Spleen (tissue), 13 donors: ENCODE measurements at regions of chr11 and their contacts with region 1.

Region 1: DNA sequence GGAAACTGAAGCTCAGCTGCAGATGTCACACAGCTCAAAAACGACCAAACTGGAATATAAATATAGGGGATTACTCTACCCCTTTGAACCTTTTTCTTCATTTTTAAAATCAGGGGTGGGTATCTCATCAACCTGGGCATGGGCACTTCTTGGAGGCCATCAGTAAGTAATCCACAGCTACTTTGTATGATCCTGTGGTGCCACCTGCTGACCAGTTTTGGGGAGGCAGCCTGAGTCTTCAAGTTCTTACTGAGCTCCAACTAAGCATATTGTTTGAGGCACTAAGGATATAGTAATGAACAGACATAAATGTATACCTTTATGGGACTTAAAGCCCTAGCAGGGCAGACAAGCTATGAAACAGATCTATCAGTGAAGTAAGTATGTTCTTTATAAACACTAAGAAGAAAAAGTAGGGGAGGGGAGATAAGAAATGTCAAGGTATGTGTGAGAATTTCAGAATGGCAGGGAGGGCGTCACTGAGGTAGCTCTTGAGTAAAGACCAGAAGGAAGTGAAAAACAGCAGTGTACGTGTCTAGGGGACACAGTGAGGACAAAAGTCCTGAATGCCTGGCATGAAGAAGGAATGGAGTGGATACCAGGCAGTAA is 18.4 kb downstream of the TUB start:
- DNase-seq: peak; percentile 78
- H3K4me3 ChIP-seq: no peak overlapping the region
- H3K27ac ChIP-seq: no peak overlapping the region
- H3K4me1 ChIP-seq: no peaks in the 10 kb centered on the region
- H3K27me3 ChIP-seq: no peaks in the 10 kb centered on the region
- CTCF ChIP-seq: peak in 10 of 11 experiments; percentile 55 to 85 (median 73)
- POLR2A ChIP-seq: no peak

Region 2: DNA sequence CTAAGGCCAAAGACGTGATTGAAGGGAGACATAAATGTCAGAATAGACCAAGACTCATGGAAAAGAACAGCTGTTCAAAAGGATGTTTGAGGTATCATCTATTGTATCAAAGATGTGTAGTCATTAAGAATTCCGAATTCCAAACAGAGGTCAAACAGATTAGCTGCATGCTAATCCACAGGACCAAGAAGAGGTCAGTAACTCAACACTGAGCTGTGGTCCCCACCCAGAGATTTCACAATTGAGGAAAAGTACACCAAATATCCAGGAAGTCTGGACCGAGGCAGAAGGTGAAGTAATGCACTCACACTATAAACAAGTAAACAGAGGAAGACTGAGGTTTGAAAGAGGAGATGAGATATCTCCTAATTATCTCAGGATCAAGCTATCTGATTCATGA is 273.1 kb before region 1 on chr11:
- intact Hi-C with region 1: no loop called
- DNase-seq: no peak
- H3K4me3 ChIP-seq: no peak overlapping the region
- H3K27ac ChIP-seq: no peak overlapping the region
- H3K4me1 ChIP-seq: no peaks in the 10 kb centered on the region
- H3K27me3 ChIP-seq: no peaks in the 10 kb centered on the region
- CTCF ChIP-seq: no peak
- POLR2A ChIP-seq: no peak

Region 3: GRCh38 chr11:7846003-7846402 is 253.4 kb before region 1 on chr11:
- intact Hi-C with region 1: no loop called
- DNase-seq: no peak
- H3K4me3 ChIP-seq: no peak overlapping the region
- H3K27ac ChIP-seq: no peak overlapping the region
- H3K4me1 ChIP-seq: no peaks in the 10 kb centered on the region
- H3K27me3 ChIP-seq: no peaks in the 10 kb centered on the region
- CTCF ChIP-seq: no peak
- POLR2A ChIP-seq: no peak

Region 4: GRCh38 chr11:8033305-8034105 is 65.9 kb before region 1 on chr11:
- intact Hi-C with region 1: loop called (anchors 10 kb)
- DNase-seq: peak; percentile 85
- H3K4me3 ChIP-seq: peak overlapping the region in 1 of 8 donors; percentile 33
- H3K27ac ChIP-seq: no peak overlapping the region
- H3K4me1 ChIP-seq: peaks cover 4 to 9% (median 8%) of the 10 kb centered on the region in 6 donors
- H3K27me3 ChIP-seq: peaks cover 0 to 45% (median 15%) of the 10 kb centered on the region in 7 donors
- CTCF ChIP-seq: peak; percentile 27 to 91 (median 84)
- POLR2A ChIP-seq: no peak